GM12878 (cell line): ENCODE measurements at regions of chr4 and their contacts with region 1.

Region 1: DNA sequence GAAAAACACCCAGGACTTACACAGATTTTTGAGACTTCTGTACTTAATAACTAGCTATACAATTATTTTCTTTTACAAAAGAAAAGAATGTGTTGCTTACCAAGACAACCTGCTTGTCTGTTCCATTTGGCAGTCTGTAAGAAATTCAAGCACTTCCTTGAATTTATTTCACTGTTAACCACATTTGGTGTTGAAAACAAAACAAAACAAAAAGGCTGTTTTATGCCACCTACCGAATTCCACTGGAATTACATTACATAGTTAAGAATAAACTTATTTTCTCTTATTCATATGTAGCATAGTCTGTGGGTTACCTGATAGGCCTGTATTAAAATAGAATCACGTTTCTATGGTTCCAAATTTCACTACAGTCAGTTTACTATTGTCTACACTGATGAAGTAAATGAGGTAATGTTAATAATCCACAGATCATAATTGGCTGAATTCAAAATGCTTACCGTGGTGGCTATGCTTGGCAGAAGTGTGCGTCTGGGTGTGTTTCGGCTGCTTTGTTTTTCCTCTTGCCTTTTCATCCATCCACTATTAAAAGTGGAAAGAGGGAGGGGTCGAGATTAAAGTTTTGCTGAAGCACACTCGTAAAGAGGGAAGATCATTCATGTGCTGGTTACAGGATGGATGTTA is at the start of gene TLR1:
- DNase-seq: peak; percentile 62
- ATAC-seq: peak; percentile 67
- H3K4me3 ChIP-seq: peak within 1 kb of the TSS; percentile 41
- H3K27ac ChIP-seq: peak within 1 kb of the TSS; percentile 86
- H3K4me1 ChIP-seq: peaks cover 20% of the 10 kb centered on the region
- H3K27me3 ChIP-seq: no peaks in the 10 kb centered on the region
- CTCF ChIP-seq: peak; percentile 22 to 47 (median 38); a peak in 5 of 6 replicates
- EP300 ChIP-seq: no peak
- POLR2A ChIP-seq: no peak
- RAD21 ChIP-seq: peak; percentile 64
- polyA plus RNA-seq, gene TLR1: 9.3 to 9.5 TPM

Region 2: GRCh38 chr4:37802068-37802666 is 1002.6 kb before region 1 on chr4:
- CTCF ChIA-PET with region 1: no interaction called
- POLR2A ChIA-PET with region 1: no interaction called
- RAD21 ChIA-PET with region 1: no interaction called
- SMC1A ChIA-PET with region 1: no interaction called
- in situ Hi-C with region 1: no loop called
- intact Hi-C with region 1: no loop called
- DNase-seq: no peak
- ATAC-seq: no peak; the same call in 2 of the 3 replicates
- H3K4me3 ChIP-seq: no peak overlapping the region
- H3K27ac ChIP-seq: no peak overlapping the region
- H3K4me1 ChIP-seq: no peaks in the 10 kb centered on the region
- H3K27me3 ChIP-seq: no peaks in the 10 kb centered on the region; a peak in 1 of 4 replicates
- CTCF ChIP-seq: peak; percentile 12 to 41 (median 24); a peak in 4 of 6 replicates
- EP300 ChIP-seq: no peak
- POLR2A ChIP-seq: no peak
- RAD21 ChIP-seq: peak; percentile 44

Region 3: GRCh38 chr4:38034986-38035882 is 769.5 kb before region 1 on chr4:
- CTCF ChIA-PET with region 1: no interaction called
- POLR2A ChIA-PET with region 1: no interaction called
- RAD21 ChIA-PET with region 1: no interaction called
- SMC1A ChIA-PET with region 1: no interaction called
- in situ Hi-C with region 1: no loop called
- intact Hi-C with region 1: no loop called
- DNase-seq: no peak
- ATAC-seq: peak; percentile 74
- H3K4me3 ChIP-seq: no peak overlapping the region
- H3K27ac ChIP-seq: no peak overlapping the region
- H3K4me1 ChIP-seq: no peaks in the 10 kb centered on the region
- H3K27me3 ChIP-seq: no peaks in the 10 kb centered on the region
- CTCF ChIP-seq: peak; percentile 44 to 75 (median 64); a peak in 5 of 6 replicates
- EP300 ChIP-seq: no peak
- POLR2A ChIP-seq: no peak
- RAD21 ChIP-seq: peak; percentile 89

Region 4: DNA sequence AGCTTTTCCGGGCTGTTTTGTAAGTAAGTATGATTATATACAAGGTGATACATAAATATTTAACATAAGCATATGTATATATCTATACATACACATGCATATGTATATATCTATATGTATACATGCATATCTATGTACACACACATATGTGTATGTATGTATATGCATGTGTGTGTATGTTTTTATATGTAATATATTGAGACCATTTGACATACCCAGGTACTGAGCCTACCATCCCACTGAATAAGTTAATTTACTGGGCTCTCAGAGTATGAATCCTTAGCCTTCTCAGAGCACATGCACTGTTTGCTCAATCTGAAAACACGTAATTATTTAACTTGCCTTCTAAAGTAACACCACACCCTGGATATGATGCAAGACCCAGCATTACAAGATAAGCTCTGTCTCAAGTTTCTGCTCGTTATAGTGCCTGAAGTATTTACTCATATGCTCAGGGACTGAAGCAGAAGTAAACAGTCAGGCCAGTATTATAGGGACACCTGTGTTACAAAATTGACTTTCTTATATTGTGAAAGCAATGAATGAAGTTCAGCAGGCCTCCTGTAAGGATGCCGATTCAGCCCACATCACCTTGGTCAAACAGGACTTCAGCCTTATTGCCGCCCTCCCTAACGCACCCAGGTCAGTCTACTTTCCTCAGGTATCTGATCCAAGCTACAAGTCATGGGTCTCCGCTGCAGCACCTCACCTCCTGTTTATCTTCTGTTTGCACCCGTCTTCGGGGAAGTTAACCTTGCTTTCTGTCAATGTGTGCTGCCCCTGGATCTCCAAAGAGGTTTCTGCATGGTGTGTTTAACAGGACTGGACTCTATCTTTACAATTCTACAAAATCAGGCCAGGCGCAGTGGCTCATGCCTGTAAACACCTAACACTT is 183.7 kb before region 1 on chr4:
- CTCF ChIA-PET with region 1: no interaction called
- POLR2A ChIA-PET with region 1: no interaction called
- RAD21 ChIA-PET with region 1: no interaction called
- SMC1A ChIA-PET with region 1: no interaction called
- in situ Hi-C with region 1: no loop called
- intact Hi-C with region 1: no loop called
- DNase-seq: no peak
- ATAC-seq: no peak
- H3K4me3 ChIP-seq: no peak overlapping the region
- H3K27ac ChIP-seq: no peak overlapping the region
- H3K4me1 ChIP-seq: no peaks in the 10 kb centered on the region
- H3K27me3 ChIP-seq: no peaks in the 10 kb centered on the region
- CTCF ChIP-seq: no peak
- EP300 ChIP-seq: no peak
- POLR2A ChIP-seq: no peak
- RAD21 ChIP-seq: no peak

Region 5: DNA sequence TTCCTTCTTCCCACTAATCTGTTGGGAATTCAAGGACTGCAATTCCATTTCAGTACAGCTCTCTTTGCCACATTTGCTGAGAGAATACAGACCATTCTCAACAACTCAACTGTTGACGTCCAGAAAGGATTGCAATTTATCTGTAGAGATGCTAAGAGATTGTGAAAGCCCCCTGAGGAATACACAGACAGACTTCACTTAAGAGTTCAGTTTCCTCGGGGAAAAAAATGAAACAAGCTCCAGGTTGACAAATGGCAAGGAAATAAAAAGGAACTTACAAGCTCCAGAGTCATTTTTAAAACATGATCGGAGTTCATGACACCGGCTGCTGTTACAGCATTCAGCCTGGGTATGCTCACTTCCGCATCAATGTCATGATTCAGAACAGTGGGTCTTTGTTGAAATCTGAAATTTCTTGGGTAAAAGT is 35.8 kb before region 1 on chr4:
- CTCF ChIA-PET with region 1: interaction called, 166 read pairs
- POLR2A ChIA-PET with region 1: interaction called, 100 read pairs
- RAD21 ChIA-PET with region 1: interaction called, 216 read pairs
- SMC1A ChIA-PET with region 1: interaction called, 250 read pairs
- in situ Hi-C with region 1: no loop called
- intact Hi-C with region 1: no loop called
- DNase-seq: no peak
- ATAC-seq: peak; percentile 67
- H3K4me3 ChIP-seq: no peak overlapping the region
- H3K27ac ChIP-seq: peak overlapping the region; percentile 56
- H3K4me1 ChIP-seq: peaks cover 16% of the 10 kb centered on the region
- H3K27me3 ChIP-seq: no peaks in the 10 kb centered on the region
- CTCF ChIP-seq: no peak
- EP300 ChIP-seq: no peak
- POLR2A ChIP-seq: no peak
- RAD21 ChIP-seq: no peak

Region 6: GRCh38 chr4:38818441-38818976 is 13.7 kb after region 1 on chr4:
- CTCF ChIA-PET with region 1: interaction called, 49 read pairs
- POLR2A ChIA-PET with region 1: interaction called, 110 read pairs
- RAD21 ChIA-PET with region 1: interaction called, 171 read pairs
- SMC1A ChIA-PET with region 1: interaction called, 178 read pairs
- in situ Hi-C with region 1: no loop called
- intact Hi-C with region 1: loop called (anchors 1 kb)
- DNase-seq: peak; percentile 81
- ATAC-seq: peak; percentile 76
- H3K4me3 ChIP-seq: no peak overlapping the region
- H3K27ac ChIP-seq: peak overlapping the region; percentile 96
- H3K4me1 ChIP-seq: peaks cover 40% of the 10 kb centered on the region
- H3K27me3 ChIP-seq: no peaks in the 10 kb centered on the region
- CTCF ChIP-seq: no peak
- EP300 ChIP-seq: peak; percentile 94 to 96; a peak in 3 of 4 replicates
- POLR2A ChIP-seq: no peak; the same call in 1 of the 2 replicates
- RAD21 ChIP-seq: no peak

Region 7: GRCh38 chr4:39032218-39033085 is 227.7 kb after region 1 on chr4 and contains the start of gene TMEM156:
- CTCF ChIA-PET with region 1: interaction called, 3 read pairs
- POLR2A ChIA-PET with region 1: no interaction called
- RAD21 ChIA-PET with region 1: interaction called, 12 read pairs
- SMC1A ChIA-PET with region 1: interaction called, 6 read pairs
- in situ Hi-C with region 1: no loop called
- intact Hi-C with region 1: loop called (anchors 2 kb)
- DNase-seq: peak; percentile 82
- ATAC-seq: peak; percentile 70
- H3K4me3 ChIP-seq: peak within 1 kb of the TSS; percentile 79
- H3K27ac ChIP-seq: peak within 1 kb of the TSS; percentile 88
- H3K4me1 ChIP-seq: peaks cover 28% of the 10 kb centered on the region
- H3K27me3 ChIP-seq: no peaks in the 10 kb centered on the region
- CTCF ChIP-seq: no peak
- EP300 ChIP-seq: peak; percentile 56 to 90; a peak in 2 of 4 replicates
- POLR2A ChIP-seq: peak; percentile 39; the same call in 1 of the 2 replicates
- RAD21 ChIP-seq: no peak
- polyA plus RNA-seq, gene TMEM156: 35.0 to 36.2 TPM